Activated CD8-positive, alpha-beta T cell treated with anti-CD3 and anti-CD28 coated beads, Interleukin-2, amount 10 ng/mL, durations not matched to agents 7 days and 5 days (primary cell): ENCODE measurements at regions of chr2 and their contacts with region 1.

Region 1: GRCh38 chr2:28751252-28751955 is at the start of gene PPP1CB:
- DNase-seq: peak; percentile 95
- ATAC-seq: peak; percentile 86
- H3K4me3 Mint-ChIP-seq: peak within 1 kb of the TSS; percentile 87
- H3K27ac Mint-ChIP-seq: peak within 1 kb of the TSS; percentile 97
- H3K4me1 Mint-ChIP-seq: peaks cover 50% of the 10 kb centered on the region
- H3K27me3 Mint-ChIP-seq: no peaks in the 10 kb centered on the region
- total RNA-seq, gene PPP1CB: 174 to 183 TPM

Region 2: DNA sequence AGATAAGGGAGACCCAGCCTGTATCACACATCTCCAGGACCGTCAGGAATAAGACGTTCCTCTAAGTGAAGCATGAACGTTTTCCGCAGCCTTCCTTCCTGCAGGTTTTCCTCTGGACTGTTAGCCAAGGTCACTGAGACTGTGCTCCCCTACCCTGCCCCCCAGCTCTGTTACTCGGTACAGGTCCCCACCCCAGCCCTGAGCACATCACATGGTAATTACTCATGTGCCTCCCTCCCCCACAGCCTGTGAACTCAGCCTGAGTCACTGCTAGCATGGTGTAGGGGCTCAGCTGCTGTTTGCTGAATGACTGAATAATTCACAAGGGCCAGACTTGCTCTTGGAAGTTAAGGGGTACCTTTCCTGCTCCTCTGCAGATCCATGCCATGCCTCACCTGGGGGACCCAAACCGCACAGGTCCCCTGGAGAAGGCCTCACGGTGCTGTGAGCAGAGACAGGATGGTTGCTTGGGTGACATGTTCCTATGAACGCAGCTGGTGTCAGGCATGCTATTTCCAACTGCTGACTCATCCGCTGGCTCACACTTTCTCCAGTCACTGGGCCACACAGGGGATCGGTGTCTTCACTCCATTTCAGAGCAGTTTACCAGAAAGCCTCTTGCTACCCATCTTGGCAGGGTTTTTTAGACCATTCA is 167.4 kb before region 1 on chr2:
- CTCF ChIA-PET with region 1: interaction called, 4 read pairs
- POLR2A ChIA-PET with region 1: interaction called, 15 read pairs
- DNase-seq: peak; percentile 62
- ATAC-seq: peak; percentile 33
- H3K4me3 Mint-ChIP-seq: no peak overlapping the region
- H3K27ac Mint-ChIP-seq: no peak overlapping the region
- H3K4me1 Mint-ChIP-seq: peaks cover 61% of the 10 kb centered on the region
- H3K27me3 Mint-ChIP-seq: no peaks in the 10 kb centered on the region

Region 3: GRCh38 chr2:28621172-28622100 is 130.0 kb before region 1 on chr2:
- CTCF ChIA-PET with region 1: interaction called, 21 read pairs
- POLR2A ChIA-PET with region 1: interaction called, 11 read pairs
- DNase-seq: peak; percentile 79
- ATAC-seq: peak; percentile 84
- H3K4me3 Mint-ChIP-seq: peak overlapping the region; percentile 64
- H3K27ac Mint-ChIP-seq: peak overlapping the region; percentile 94
- H3K4me1 Mint-ChIP-seq: peaks cover 95% of the 10 kb centered on the region
- H3K27me3 Mint-ChIP-seq: no peaks in the 10 kb centered on the region